Activated naive CD4-positive, alpha-beta T cell treated with anti-CD3 and anti-CD28 coated beads for 36 hours (primary cell): ENCODE measurements at regions of chr4 and their contacts with region 1.

Region 1: GRCh38 chr4:185874516-185875230 is 62.7 kb upstream of the SORBS2 start:
- DNase-seq: no peak
- H3K4me3 Mint-ChIP-seq: no peak overlapping the region
- H3K27ac Mint-ChIP-seq: no peak overlapping the region
- H3K4me1 Mint-ChIP-seq: no peaks in the 10 kb centered on the region
- H3K27me3 Mint-ChIP-seq: peaks cover 2% of the 10 kb centered on the region

Region 2: DNA sequence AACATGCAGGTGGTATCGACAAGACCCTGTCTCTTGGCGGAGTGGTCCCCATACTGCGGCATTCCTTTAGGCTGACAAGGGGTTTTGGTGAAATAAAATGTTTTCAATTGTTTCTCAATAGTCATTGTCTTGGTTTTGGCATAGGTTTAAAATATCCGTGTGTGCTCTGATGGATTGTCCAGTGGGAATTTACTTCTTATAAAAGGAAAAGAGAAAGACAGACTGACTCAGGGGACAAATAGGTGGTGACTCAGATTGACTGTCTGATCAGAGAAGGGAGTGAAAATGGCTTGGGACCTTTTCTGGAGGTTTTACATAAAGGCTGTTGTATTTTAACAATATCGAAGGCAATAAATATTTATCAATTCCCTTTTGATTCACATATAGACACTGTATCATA is 192.4 kb before region 1 on chr4:
- CTCF ChIA-PET with region 1: no interaction called
- intact Hi-C with region 1: no loop called
- DNase-seq: no peak
- H3K4me3 Mint-ChIP-seq: no peak overlapping the region
- H3K27ac Mint-ChIP-seq: no peak overlapping the region
- H3K4me1 Mint-ChIP-seq: no peaks in the 10 kb centered on the region
- H3K27me3 Mint-ChIP-seq: peaks cover 4% of the 10 kb centered on the region

Region 3: DNA sequence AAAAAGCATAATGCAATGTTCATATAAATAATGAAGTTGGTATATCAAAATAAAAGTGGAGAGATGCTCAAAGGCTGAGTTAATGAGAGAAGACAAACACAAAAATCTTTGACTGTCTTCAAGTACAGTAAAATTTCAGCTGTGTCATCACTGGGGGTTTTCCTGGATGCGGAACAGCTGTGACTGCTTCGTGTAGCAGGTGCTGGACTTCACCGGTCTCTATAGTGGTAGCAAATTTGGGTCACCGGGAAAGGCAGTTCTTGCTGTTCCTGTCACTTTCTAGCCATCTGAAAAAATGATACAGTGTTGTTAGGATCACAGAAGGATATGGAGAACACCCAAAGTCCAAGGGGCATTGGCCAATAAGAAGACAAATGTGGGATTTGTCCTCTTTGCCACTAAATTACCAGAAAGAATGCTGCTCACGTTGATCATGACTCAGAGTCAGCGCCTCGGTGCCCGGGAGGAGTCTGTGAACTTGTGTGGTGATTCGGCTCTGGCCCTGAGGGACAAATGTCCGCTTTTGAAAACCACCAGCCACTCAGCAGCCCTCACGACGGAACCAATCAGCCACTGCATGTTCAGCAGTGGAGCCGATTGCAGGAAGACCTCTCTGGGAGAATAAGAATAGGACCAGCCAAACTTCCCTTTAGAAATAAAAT is 1079.1 kb after region 1 on chr4:
- CTCF ChIA-PET with region 1: no interaction called
- intact Hi-C with region 1: no loop called
- DNase-seq: no peak
- H3K4me3 Mint-ChIP-seq: no peak overlapping the region
- H3K27ac Mint-ChIP-seq: no peak overlapping the region
- H3K4me1 Mint-ChIP-seq: no peaks in the 10 kb centered on the region
- H3K27me3 Mint-ChIP-seq: no peaks in the 10 kb centered on the region

Region 4: GRCh38 chr4:187268940-187269339 is 1394.3 kb after region 1 on chr4:
- CTCF ChIA-PET with region 1: no interaction called
- intact Hi-C with region 1: loop called (anchors 10 kb)
- DNase-seq: no peak
- H3K4me3 Mint-ChIP-seq: no peak overlapping the region
- H3K27ac Mint-ChIP-seq: no peak overlapping the region
- H3K4me1 Mint-ChIP-seq: no peaks in the 10 kb centered on the region
- H3K27me3 Mint-ChIP-seq: no peaks in the 10 kb centered on the region